Gastrocnemius medialis (tissue), 4 donors: ENCODE measurements at regions of chr17 and their contacts with region 1.

Region 1: DNA sequence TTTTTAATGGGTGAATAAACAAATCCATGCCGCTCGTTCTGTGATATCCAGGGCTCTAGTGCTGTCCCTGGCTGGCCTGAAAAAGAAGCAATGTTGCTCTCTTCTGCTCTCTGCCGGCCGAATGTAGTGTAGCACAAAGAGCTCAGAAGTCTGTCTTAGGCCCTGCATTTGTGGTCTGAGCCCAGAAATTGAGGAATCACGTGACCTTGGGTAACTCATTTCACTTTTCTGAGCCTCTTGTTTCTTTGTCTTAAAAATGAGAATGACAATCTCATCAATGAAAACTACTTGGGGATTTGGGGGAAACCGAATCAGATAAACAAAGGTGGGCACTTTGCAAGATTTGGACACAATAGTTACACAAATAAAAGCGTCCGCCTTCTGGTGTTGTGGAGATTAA is 381.6 kb upstream of the ASIC2 start:
- DNase-seq: peak in 1 of 2 donors; percentile 22
- ATAC-seq: peak; percentile 72 to 73
- H3K4me3 ChIP-seq: no peak overlapping the region
- H3K27ac ChIP-seq: no peak overlapping the region
- H3K4me1 ChIP-seq: no peaks in the 10 kb centered on the region
- H3K27me3 ChIP-seq: no peaks in the 10 kb centered on the region
- CTCF ChIP-seq: peak; percentile 30 to 70 (median 51)
- POLR2A ChIP-seq: no peak

Region 2: DNA sequence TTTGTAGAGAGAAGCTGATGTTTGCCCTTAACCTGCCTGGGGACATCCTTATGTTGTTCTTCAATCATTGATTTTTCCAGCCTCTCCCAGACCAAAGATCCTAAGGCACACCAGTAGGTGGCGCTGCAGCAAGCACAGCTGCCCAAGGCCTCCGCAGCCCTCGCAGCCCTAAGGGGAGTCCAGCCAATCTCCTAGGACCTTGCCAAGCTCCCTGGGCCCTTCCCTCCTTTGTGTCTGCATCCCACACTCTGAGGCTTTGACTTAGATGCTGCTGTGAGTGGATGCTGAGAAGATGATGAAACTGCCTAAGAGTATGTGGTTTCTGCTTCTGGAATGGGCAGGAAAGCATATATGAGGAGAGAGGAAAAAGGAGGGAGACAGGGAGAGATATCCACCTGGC is 635.9 kb before region 1 on chr17:
- in situ Hi-C with region 1: loop called in 1 of 4 experiments (anchors 10 kb)
- intact Hi-C with region 1: loop called (anchors 10 kb)
- DNase-seq: no peak
- ATAC-seq: no peak
- H3K4me3 ChIP-seq: no peak overlapping the region
- H3K27ac ChIP-seq: no peak overlapping the region
- H3K4me1 ChIP-seq: no peaks in the 10 kb centered on the region
- H3K27me3 ChIP-seq: peaks cover 0 to 15% (median 5%) of the 10 kb centered on the region in 3 donors
- CTCF ChIP-seq: peak in 4 of 5 experiments; percentile 30 to 49 (median 36)
- POLR2A ChIP-seq: no peak

Region 3: GRCh38 chr17:33520426-33521330 is 154.0 kb before region 1 on chr17:
- in situ Hi-C with region 1: loop called in 1 of 4 experiments (anchors 25 kb)
- intact Hi-C with region 1: loop called (anchors 10 kb)
- DNase-seq: no peak
- ATAC-seq: no peak
- H3K4me3 ChIP-seq: no peak overlapping the region
- H3K27ac ChIP-seq: no peak overlapping the region
- H3K4me1 ChIP-seq: no peaks in the 10 kb centered on the region
- H3K27me3 ChIP-seq: no peaks in the 10 kb centered on the region
- CTCF ChIP-seq: peak in 3 of 5 experiments; percentile 37 to 56 (median 46)
- POLR2A ChIP-seq: no peak

Region 4: GRCh38 chr17:33704856-33705255 is 30.2 kb after region 1 on chr17:
- in situ Hi-C with region 1: no loop called
- intact Hi-C with region 1: no loop called
- DNase-seq: no peak
- ATAC-seq: no peak
- H3K4me3 ChIP-seq: no peak overlapping the region
- H3K27ac ChIP-seq: no peak overlapping the region
- H3K4me1 ChIP-seq: no peaks in the 10 kb centered on the region
- H3K27me3 ChIP-seq: no peaks in the 10 kb centered on the region
- CTCF ChIP-seq: no peak
- POLR2A ChIP-seq: no peak